Naive thymus-derived CD8-positive, alpha-beta T cell (primary cell): ENCODE measurements at regions of chr12 and their contacts with region 1.

Region 1: DNA sequence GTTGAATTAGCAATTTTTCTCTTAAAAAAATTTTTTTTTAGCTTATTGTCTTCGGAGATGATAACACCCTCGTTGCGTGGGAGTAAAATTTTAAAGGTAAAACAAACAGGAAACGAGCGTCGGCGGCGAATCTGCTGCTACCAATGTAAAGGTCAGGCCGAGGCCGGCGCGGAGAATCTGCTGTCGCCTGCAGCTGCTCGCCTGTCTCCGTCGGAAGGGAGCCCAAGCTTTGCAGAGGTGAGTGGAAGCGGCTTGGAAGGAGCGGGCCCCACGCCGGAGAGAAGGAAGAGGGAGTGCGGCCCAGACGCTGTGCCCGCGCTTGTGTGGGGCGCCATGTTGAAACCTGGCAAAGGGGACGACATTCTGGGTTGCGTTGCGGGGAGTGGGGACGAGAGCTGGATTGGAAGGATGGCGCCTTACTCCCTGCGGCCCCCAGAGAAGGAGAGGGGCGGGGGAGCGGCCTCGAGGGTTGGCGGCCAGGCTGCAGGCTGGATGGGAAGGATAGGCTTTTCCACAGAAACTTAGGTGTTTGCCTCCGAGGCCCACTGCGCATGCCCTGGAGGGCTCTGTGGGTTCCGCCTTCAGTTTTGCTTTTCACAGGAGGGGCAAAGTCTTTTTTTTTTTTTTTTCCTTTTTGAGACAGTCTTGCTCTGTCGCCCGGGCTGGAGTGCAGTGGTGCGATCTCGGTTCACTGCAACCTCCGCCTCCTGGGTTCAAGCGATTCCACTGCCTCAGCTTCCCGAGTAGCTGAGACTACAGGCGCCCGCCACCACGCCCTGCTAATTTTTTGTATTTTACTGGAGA is at the start of gene SNRNP35:
- DNase-seq: peak; percentile 77 to 98 (median 83)
- ATAC-seq: peak; percentile 82 to 84
- H3K4me3 Mint-ChIP-seq: peak within 1 kb of the TSS; percentile 98 to 100 (median 100)
- H3K27ac Mint-ChIP-seq: peak within 1 kb of the TSS; percentile 100
- H3K4me1 Mint-ChIP-seq: peaks cover 14 to 41% (median 28%) of the 10 kb centered on the region in 4 donors
- H3K27me3 Mint-ChIP-seq: no peaks in the 10 kb centered on the region
- polyA plus RNA-seq, gene SNRNP35: 16.8 to 27.0 (median 20.4) TPM

Region 2: GRCh38 chr12:123398550-123399254 is 59.5 kb before region 1 on chr12:
- POLR2A ChIA-PET with region 1: no interaction called
- DNase-seq: no peak
- ATAC-seq: no peak
- H3K4me3 Mint-ChIP-seq: no peak overlapping the region
- H3K27ac Mint-ChIP-seq: peak overlapping the region in 1 of 10 donors; percentile 62
- H3K4me1 Mint-ChIP-seq: peaks cover 0 to 13% (median 9%) of the 10 kb centered on the region in 4 donors
- H3K27me3 Mint-ChIP-seq: no peaks in the 10 kb centered on the region

Region 3: DNA sequence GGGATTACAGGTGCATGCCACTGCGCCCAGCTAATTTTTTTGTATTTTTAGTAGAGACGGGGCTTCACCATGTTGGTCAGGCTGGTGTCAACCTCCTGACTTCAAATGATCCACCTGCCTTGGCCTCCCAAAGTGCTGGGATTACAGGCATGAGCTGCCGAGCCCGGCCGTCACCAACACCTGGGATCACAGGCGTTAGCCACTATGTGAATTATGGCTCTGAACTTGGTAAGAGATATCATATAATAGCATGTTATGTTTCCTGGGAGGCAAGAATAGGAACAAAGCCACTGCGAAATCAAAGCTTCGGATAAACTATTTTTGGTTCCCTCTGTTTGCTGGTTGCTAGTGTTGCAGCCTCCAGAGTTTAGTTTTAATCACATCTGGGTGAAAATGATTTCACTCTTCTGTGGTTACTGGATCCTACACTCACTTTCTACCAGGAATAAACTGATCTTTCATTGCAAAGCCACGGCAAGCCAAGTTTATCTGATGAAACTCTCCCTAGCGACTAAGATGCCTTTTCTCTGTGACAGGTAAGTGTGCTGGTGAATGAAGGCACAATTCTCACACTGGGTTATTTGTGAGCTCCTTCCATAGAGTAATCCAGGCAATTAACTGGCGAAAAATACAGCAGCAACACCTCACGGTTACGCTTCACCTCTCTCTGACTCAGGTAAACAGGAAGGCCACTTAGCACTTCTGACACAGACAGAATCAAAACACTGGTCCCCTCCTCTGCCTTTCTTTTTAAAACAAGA is 16.5 kb after region 1 on chr12:
- POLR2A ChIA-PET with region 1: interaction called, 17 read pairs
- DNase-seq: peak in 2 of 10 donors; percentile 34 to 44
- ATAC-seq: peak; percentile 80 to 89
- H3K4me3 Mint-ChIP-seq: peak overlapping the region in 8 of 10 donors; percentile 51 to 84 (median 68)
- H3K27ac Mint-ChIP-seq: peak overlapping the region; percentile 82 to 98 (median 91)
- H3K4me1 Mint-ChIP-seq: peaks cover 16 to 34% (median 25%) of the 10 kb centered on the region in 4 donors
- H3K27me3 Mint-ChIP-seq: no peaks in the 10 kb centered on the region

Region 4: GRCh38 chr12:123580772-123581171 is 122.6 kb after region 1 on chr12:
- POLR2A ChIA-PET with region 1: interaction called, 10 read pairs
- DNase-seq: no peak
- ATAC-seq: no peak
- H3K4me3 Mint-ChIP-seq: no peak overlapping the region
- H3K27ac Mint-ChIP-seq: peak overlapping the region in 4 of 10 donors; percentile 0 to 52 (median 18)
- H3K4me1 Mint-ChIP-seq: peaks cover 13 to 39% (median 24%) of the 10 kb centered on the region in 4 donors
- H3K27me3 Mint-ChIP-seq: no peaks in the 10 kb centered on the region

Region 5: DNA sequence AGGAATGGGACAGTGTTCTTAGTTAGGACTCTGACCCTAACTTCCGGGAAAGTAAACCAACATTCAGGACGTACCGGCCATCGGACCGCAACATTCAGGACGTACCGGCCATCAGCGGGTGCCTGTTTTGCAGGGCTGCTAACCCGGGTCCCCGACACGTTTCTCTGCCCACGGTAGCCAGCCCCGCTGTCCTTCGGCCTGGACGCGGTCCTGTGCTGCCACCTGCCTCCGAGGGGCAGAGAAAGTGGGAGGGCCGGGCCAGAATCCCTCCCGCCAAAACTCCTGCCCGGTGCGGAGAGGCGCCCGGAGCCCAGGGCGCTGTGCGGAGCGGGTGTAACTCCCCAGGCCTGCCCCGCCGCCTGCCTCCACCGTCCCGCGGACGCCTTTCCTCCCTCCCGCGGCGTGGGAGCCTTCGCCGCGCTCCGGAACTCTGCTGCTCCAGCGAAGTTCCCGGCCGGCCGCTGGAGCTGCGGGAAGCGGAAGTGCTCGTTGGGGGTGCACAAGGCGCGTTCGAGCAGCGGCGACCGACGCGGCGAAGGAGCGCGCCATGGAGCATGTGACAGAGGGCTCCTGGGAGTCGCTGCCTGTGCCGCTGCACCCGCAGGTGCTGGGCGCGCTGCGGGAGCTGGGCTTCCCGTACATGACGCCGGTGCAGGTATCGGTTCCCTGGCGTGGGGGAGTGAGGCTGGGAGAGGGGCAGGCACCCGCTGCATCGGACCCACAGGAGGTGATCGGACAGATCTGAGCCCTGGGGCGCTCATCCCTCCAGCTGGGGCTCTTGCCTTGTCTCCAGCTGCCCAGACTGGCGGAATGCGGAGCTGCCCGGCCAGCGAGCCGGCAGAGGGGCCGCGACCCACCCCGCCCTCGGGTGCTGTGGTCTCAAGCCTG is 143.7 kb after region 1 on chr12 and contains the start of gene DDX55:
- POLR2A ChIA-PET with region 1: interaction called, 10 read pairs
- DNase-seq: peak; percentile 81 to 90 (median 84)
- ATAC-seq: peak; percentile 93 to 97
- H3K4me3 Mint-ChIP-seq: peak within 1 kb of the TSS; percentile 88 to 99 (median 95)
- H3K27ac Mint-ChIP-seq: peak within 1 kb of the TSS; percentile 91 to 97 (median 94)
- H3K4me1 Mint-ChIP-seq: peaks cover 17 to 54% (median 40%) of the 10 kb centered on the region in 4 donors
- H3K27me3 Mint-ChIP-seq: no peaks in the 10 kb centered on the region
- polyA plus RNA-seq, gene DDX55: 15.2 to 24.1 (median 19.1) TPM